Gastrocnemius medialis (tissue), 4 donors: ENCODE measurements at regions of chr10 and their contacts with region 1.

Region 1: GRCh38 chr10:46992803-46993561 is 81.8 kb downstream of the PTPN20 start:
- DNase-seq: peak in 1 of 2 donors; percentile 31
- ATAC-seq: peak; percentile 66 to 80
- H3K4me3 ChIP-seq: no peak overlapping the region
- H3K27ac ChIP-seq: peak overlapping the region; percentile 10 to 66 (median 36)
- H3K4me1 ChIP-seq: no peaks in the 10 kb centered on the region
- H3K27me3 ChIP-seq: no peaks in the 10 kb centered on the region
- CTCF ChIP-seq: peak in 1 of 5 experiments; percentile 10
- POLR2A ChIP-seq: no peak

Region 2: DNA sequence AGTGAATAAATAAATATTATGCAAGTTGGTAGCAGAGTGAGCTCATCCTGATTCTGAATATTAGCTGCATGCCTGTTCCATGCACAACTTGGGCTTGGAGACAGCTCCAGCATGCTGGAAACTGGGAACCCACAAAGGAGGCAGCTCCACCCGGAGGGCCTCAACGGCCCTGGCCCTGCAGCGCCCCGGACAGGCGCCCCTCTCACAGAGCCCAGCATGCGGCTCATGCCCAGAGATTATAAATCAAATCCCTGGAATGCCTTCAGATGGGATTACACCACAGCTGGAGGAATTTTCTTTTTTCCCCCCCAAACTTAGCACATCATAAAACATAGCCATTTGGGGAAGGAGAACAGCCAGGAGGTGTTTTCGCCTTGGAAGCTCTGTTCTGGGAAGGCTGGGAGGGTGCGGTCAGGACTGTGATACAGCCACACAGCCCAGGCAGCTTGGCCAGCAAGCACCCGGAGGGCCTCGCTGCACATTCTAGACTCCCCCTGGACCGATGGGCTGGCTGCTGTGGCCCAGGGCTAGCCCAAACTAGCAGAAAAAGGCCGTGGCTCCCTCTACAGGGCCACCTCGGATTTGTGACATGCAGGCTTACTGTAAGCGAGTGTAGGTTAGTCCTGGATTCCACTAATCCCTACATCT is 20.6 kb after region 1 on chr10:
- in situ Hi-C with region 1: no loop called
- intact Hi-C with region 1: no loop called
- DNase-seq: peak in 1 of 2 donors; percentile 53
- ATAC-seq: peak; percentile 73 to 74
- H3K4me3 ChIP-seq: no peak overlapping the region
- H3K27ac ChIP-seq: peak overlapping the region in 1 of 4 donors; percentile 10
- H3K4me1 ChIP-seq: no peaks in the 10 kb centered on the region
- H3K27me3 ChIP-seq: no peaks in the 10 kb centered on the region
- CTCF ChIP-seq: no peak
- POLR2A ChIP-seq: no peak

Region 3: DNA sequence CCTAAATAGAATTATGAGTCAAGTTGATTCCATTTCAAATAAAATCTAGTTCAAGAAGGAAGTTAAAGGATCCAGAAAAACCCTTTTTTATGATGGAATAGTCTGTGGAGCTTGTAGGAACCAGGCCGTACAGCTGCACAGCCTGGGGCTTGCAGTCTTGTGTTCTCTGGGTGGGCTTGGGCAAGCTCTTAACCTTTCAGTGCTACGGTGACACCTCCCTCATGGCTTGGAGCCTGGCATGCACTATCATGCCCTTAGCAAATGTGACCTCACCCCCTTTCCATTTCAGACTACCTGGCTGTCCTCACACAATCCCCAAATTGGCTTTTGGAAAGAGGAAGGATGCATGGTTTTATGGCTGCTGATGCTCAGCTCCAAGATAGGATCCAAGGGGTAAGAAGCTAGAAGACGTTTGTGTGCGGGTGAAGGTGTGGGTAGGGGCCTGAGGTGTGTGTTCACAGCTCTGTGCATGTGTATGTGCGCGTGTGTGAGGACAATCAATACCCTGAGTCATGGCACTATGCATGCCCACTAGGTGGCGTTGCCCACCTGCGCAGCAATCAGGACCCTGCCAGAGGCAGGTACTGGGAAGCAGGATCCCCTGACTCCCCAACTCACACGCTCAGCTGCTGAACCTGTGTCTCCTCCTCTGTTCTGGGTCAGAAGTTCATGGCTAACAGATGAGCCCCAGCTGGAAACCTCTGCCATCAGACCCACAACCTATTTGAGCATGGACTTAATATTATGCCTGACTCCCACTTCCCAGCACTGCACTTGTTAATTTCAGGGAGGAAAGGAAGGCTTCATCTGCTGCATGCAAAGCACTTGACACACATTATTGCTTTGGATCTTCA is 31.6 kb after region 1 on chr10:
- in situ Hi-C with region 1: no loop called
- intact Hi-C with region 1: loop called (anchors 5 kb)
- DNase-seq: peak in 1 of 2 donors; percentile 60
- ATAC-seq: peak; percentile 38 to 76
- H3K4me3 ChIP-seq: no peak overlapping the region
- H3K27ac ChIP-seq: no peak overlapping the region
- H3K4me1 ChIP-seq: no peaks in the 10 kb centered on the region
- H3K27me3 ChIP-seq: no peaks in the 10 kb centered on the region
- CTCF ChIP-seq: peak; percentile 68 to 79 (median 77)
- POLR2A ChIP-seq: no peak